Astrocyte of the cerebellum (primary cell): ENCODE measurements at regions of chr11 and their contacts with region 1.

Region 1: GRCh38 chr11:113705871-113706655 is at the start of gene TMPRSS5:
- DNase-seq: no peak
- H3K4me3 ChIP-seq: no peak within 1 kb of the TSS
- CTCF ChIP-seq: no peak

Region 2: GRCh38 chr11:113603277-113604059 is 102.6 kb before region 1 on chr11:
- in situ Hi-C with region 1: loop called (anchors 5 kb)
- DNase-seq: peak; percentile 66
- H3K4me3 ChIP-seq: no peak overlapping the region
- CTCF ChIP-seq: no peak